ENCODE measurements at regions of chr22 and their contacts with region 1.

Region 1: GRCh38 chr22:21641789-21642583 is at the start of gene SDF2L1:
- DNase-seq: peak; percentile 99
- H3K4me3 Mint-ChIP-seq: peak within 1 kb of the TSS; percentile 89
- H3K27ac Mint-ChIP-seq: peak within 1 kb of the TSS; percentile 95
- H3K4me1 Mint-ChIP-seq: peaks cover 35% of the 10 kb centered on the region
- H3K27me3 Mint-ChIP-seq: peaks cover 2% of the 10 kb centered on the region
- total RNA-seq, gene SDF2L1: 39.7 to 59.4 TPM

Region 2: GRCh38 chr22:21652010-21652546 is 10.1 kb after region 1 on chr22:
- CTCF ChIA-PET with region 1: interaction called, 25 read pairs
- POLR2A ChIA-PET with region 1: no interaction called
- DNase-seq: peak; percentile 93
- H3K4me3 Mint-ChIP-seq: peak overlapping the region; percentile 90
- H3K27ac Mint-ChIP-seq: peak overlapping the region; percentile 92
- H3K4me1 Mint-ChIP-seq: peaks cover 42% of the 10 kb centered on the region
- H3K27me3 Mint-ChIP-seq: no peaks in the 10 kb centered on the region

Region 3: GRCh38 chr22:21726650-21727049 is 84.7 kb after region 1 on chr22:
- CTCF ChIA-PET with region 1: no interaction called
- POLR2A ChIA-PET with region 1: no interaction called
- DNase-seq: peak; percentile 62
- H3K4me3 Mint-ChIP-seq: no peak overlapping the region
- H3K27ac Mint-ChIP-seq: no peak overlapping the region
- H3K4me1 Mint-ChIP-seq: peaks cover 6% of the 10 kb centered on the region
- H3K27me3 Mint-ChIP-seq: no peaks in the 10 kb centered on the region

Region 4: DNA sequence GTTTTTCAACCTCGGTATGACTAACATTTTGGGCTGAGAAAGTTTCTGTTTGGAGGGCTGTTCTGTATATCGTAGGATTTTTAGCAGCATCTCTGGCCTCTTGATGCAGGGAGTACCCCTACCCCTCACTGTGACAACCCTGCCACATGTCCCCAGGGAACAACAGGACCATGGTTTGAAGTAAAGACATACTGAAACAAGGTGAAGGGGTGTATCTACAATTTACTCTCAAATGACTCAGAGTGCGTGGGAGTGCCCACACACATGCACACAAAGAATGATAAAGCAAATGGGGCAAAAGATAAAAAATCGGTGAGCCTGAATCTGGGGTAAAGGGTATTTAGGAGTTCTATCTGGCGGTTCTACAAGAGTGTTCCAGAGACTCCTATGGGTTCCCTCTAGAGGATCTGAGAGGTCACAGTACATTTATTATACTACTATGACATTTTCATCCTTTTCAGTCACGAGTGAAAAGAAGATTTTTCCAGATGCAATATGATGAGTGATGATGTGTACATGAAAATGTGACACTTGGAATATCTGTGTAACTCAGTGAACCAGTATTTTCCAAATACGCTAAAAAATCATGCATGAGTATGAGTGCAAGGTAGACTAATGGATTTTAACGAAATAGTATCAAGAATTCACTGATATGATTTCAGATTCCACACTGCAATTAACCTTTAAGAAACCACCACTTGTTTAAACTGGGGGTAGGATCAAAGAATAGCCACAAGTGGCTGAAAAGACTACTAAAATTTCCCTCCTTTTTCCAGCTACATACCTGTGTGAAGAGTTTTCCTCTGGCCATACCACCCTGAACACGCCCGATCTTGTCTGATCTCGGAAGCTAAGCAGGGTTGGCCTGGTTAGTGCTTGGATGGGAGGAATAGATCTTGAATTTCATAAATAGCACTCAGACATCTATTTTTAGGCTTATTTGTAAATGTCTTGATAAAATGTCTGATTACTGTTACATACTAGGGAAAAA is 149.9 kb after region 1 on chr22:
- CTCF ChIA-PET with region 1: no interaction called
- POLR2A ChIA-PET with region 1: no interaction called
- DNase-seq: no peak
- H3K4me3 Mint-ChIP-seq: no peak overlapping the region
- H3K27ac Mint-ChIP-seq: no peak overlapping the region
- H3K4me1 Mint-ChIP-seq: peaks cover 11% of the 10 kb centered on the region
- H3K27me3 Mint-ChIP-seq: no peaks in the 10 kb centered on the region